OCI-LY7 (cell line): ENCODE measurements at regions of chr21 and their contacts with region 1.

Region 1: DNA sequence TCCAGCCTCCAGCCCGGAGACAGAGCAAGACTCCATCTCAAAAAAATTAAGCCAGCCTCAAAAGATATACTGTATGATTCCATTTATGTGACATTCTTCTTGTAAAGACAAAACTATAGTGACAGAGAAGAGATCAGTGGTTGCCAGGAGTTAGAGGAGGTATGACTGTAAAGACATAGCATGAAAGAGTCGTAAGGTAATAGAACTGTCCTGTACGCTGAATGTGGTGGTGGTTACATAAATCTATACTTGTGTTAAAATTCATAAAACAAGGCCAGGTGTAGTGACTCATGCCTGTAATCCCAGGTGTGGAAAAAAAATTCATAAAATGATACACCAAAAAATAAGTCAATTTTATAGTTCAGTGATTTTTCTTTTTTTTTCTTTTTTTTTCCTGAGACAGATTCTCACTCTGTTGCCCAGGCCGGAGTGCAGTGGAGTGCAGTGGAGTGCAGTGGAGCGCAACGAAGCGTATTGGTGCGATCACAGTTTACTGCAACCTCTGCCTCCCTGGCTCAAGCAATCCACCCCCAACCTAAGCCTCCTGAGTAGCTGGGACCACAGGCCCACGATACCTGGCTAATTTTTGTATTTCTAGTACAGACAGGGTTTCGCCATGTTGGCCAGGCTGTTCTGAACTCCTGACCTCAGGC is 84.9 kb upstream of the CXADR start:
- DNase-seq: peak; percentile 92
- H3K4me3 ChIP-seq: peak overlapping the region; percentile 50
- H3K27ac ChIP-seq: peak overlapping the region; percentile 94
- H3K4me1 ChIP-seq: peaks cover 67% of the 10 kb centered on the region
- CTCF ChIP-seq: no peak

Region 2: DNA sequence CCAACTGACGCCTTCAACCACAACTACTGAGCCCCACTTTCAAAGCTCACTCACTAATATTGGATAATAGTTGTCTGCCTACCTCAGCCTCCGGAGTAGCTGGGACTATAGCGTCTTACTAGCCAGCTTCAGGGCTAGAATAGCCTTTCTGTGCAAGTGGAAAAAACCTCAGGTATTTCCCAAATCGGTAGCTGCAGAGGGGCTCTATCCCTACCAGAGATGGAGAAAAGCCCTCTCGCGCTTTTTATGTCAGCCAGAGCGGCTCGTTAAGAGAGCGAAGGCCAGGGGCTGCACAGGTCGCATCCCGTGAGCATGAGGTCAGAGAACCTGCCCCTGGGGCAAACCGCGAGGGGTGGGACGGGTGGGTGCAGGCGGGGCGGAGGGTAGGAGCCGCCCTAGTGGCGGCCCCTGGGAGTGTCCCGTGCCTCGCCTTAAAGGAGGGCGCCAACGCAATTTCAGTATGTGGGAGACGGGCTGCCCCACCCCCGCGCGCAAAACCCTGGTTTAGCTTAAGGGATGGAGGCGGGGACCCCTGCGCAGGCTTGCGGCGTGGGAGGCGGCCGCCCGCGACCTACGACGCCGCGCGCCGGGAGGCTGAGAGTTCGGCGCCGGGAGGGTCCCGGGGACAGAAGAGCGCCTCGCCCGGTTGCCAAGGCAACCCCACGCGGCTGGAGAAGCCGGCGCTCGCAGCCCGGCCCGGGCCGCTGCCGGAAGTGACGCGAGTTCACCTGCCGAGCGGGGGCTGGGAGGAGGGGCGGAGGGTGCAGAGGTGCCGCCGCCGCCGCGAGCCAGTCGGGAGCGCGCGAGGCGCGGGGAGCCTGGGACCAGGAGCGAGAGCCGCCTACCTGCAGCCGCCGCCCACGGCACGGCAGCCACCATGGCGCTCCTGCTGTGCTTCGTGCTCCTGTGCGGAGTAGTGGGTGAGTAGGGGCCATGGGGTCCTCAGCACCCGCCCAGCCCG is 84.6 kb after region 1 on chr21 and contains the start of gene CXADR:
- CTCF ChIA-PET with region 1: no interaction called
- POLR2A ChIA-PET with region 1: interaction called, 4 read pairs
- intact Hi-C with region 1: loop called (anchors 1 kb)
- DNase-seq: peak; percentile 93
- H3K4me3 ChIP-seq: peak within 1 kb of the TSS; percentile 88
- H3K27ac ChIP-seq: peak within 1 kb of the TSS; percentile 35
- H3K4me1 ChIP-seq: peaks cover 19% of the 10 kb centered on the region
- CTCF ChIP-seq: peak; percentile 68
- total RNA-seq, gene CXADR: 6.3 and 6.7 TPM in 2 replicates

Region 3: DNA sequence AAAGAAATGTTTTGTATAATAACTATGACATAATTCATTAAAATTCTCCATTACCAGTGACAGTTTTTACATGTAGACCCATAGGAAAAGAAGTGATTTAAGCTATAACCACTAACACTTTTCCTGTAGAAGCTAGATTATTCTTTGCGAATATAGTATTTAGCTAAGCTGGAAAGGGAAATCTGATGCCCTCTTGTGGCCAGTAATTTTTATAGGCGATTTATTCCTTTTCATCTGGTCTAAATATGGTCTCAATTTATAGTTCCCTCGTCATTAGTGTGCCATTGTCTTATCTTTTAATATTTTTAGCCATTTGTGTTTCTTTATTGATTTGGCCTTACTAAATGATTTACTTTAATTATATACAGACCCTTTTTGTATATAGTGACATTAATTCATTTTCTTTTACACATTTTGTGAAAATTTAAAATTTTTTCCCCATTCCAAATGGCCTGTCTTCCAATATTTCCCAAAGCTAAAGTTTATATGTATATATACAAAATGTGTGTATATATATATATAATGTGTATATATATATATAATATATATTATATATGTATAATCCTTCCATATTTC is 158.0 kb after region 1 on chr21:
- CTCF ChIA-PET with region 1: no interaction called
- POLR2A ChIA-PET with region 1: no interaction called
- intact Hi-C with region 1: loop called (anchors 5 kb)
- DNase-seq: peak; percentile 72
- H3K4me3 ChIP-seq: no peak overlapping the region
- H3K27ac ChIP-seq: no peak overlapping the region
- H3K4me1 ChIP-seq: no peaks in the 10 kb centered on the region
- CTCF ChIP-seq: peak; percentile 88

Region 4: GRCh38 chr21:17611414-17612022 is 183.6 kb after region 1 on chr21:
- CTCF ChIA-PET with region 1: no interaction called
- POLR2A ChIA-PET with region 1: interaction called, 4 read pairs
- intact Hi-C with region 1: loop called (anchors 2 kb)
- DNase-seq: peak; percentile 85
- H3K4me3 ChIP-seq: peak overlapping the region; percentile 92
- H3K27ac ChIP-seq: peak overlapping the region; percentile 48
- H3K4me1 ChIP-seq: peaks cover 30% of the 10 kb centered on the region
- CTCF ChIP-seq: no peak

Region 5: GRCh38 chr21:18468790-18469189 is 1040.8 kb after region 1 on chr21:
- CTCF ChIA-PET with region 1: no interaction called
- POLR2A ChIA-PET with region 1: no interaction called
- intact Hi-C with region 1: loop called (anchors 10 kb)
- DNase-seq: no peak
- H3K4me3 ChIP-seq: no peak overlapping the region
- H3K27ac ChIP-seq: no peak overlapping the region
- H3K4me1 ChIP-seq: peaks cover 20% of the 10 kb centered on the region
- CTCF ChIP-seq: no peak